ENCODE measurements at regions of chr1 and their contacts with region 1.

Region 1: GRCh38 chr1:40786171-40786994 is 2.8 kb downstream of the KCNQ4 start:
- DNase-seq: no peak
- ATAC-seq: no peak
- H3K4me3 Mint-ChIP-seq: no peak overlapping the region
- H3K27ac Mint-ChIP-seq: no peak overlapping the region
- H3K4me1 Mint-ChIP-seq: peaks cover 11% of the 10 kb centered on the region
- H3K27me3 Mint-ChIP-seq: peaks cover 44% of the 10 kb centered on the region
- CTCF ChIP-seq: no peak

Region 2: GRCh38 chr1:40299366-40300248 is 486.8 kb before region 1 on chr1:
- CTCF ChIA-PET with region 1: no interaction called
- POLR2A ChIA-PET with region 1: interaction called, 12 read pairs
- intact Hi-C with region 1: no loop called
- DNase-seq: no peak
- ATAC-seq: no peak
- H3K4me3 Mint-ChIP-seq: no peak overlapping the region
- H3K27ac Mint-ChIP-seq: no peak overlapping the region
- H3K4me1 Mint-ChIP-seq: peaks cover 2% of the 10 kb centered on the region
- H3K27me3 Mint-ChIP-seq: no peaks in the 10 kb centered on the region
- CTCF ChIP-seq: no peak

Region 3: DNA sequence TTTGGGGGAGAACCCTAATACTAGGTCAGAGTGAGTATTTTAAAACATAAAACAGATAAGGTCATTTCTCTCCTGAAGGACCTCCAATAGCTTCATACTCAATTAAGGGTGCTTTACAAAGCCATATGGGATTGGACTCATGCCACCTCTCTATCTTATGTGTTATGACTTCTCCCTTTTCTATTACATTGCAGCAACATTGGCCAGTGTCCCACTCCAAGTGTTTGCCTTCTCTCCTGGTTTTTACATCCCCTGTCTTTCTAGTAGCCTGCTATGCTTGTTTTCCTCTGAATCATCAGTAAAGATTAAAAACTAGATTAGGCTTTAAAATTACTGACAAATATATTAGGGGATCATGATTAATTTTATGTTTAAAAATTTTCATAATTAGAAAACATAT is 389.2 kb after region 1 on chr1:
- CTCF ChIA-PET with region 1: no interaction called
- POLR2A ChIA-PET with region 1: no interaction called
- intact Hi-C with region 1: no loop called
- DNase-seq: no peak
- ATAC-seq: no peak
- H3K4me3 Mint-ChIP-seq: no peak overlapping the region
- H3K27ac Mint-ChIP-seq: no peak overlapping the region
- H3K4me1 Mint-ChIP-seq: peaks cover 32% of the 10 kb centered on the region
- H3K27me3 Mint-ChIP-seq: no peaks in the 10 kb centered on the region
- CTCF ChIP-seq: no peak

Measured in activated B cell treated with CpG ODN at 0.5 μM for 24 hours (primary cell).